MCF 10A (cell line): ENCODE measurements at regions of chr10 and their contacts with region 1.

Region 1: DNA sequence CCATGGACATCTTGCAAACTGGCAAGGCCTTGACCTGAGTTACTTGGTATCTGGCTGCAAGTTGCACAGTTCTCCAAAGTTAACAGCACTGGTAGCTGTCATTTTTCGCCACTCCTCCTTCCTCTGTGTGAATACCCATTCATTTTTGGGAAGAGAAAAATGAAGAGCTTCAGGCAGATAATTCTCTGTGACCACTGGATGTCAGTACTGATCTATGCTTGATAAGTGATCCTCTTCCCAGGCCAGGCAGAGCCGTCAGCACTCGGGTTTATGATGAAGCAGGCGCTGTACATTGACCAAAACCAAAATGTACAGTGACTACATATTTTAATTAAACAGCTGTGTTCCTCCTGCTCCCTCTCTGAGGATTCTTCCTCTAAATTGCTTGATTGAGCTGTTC is 55.9 kb upstream of the PDZD8 start:
- DNase-seq: peak; percentile 73
- H3K4me3 Mint-ChIP-seq: no peak overlapping the region
- H3K27ac Mint-ChIP-seq: no peak overlapping the region
- H3K4me1 Mint-ChIP-seq: no peaks in the 10 kb centered on the region
- H3K27me3 Mint-ChIP-seq: no peaks in the 10 kb centered on the region
- CTCF ChIP-seq: peak; percentile 36

Region 2: DNA sequence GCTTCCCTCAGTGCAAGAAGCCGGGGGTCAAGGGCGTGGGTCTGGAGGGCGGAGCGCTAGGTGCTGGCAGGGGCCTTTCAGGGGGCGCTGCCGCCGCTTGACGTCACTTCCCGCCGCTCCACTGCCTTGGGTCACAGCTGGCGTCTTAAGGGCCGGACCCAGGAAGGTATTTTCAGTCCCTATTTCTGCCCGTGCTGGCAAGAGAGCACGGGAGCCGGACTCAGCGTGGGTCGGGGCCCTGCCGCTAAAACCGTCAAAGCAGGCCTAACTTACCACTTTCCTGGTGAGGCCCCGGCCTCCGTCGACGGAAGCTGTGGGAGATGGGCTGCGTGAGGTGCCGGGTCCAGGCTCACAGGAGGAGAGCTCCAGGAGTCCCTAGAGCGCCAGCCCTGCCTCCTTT is 305.1 kb before region 1 on chr10:
- CTCF ChIA-PET with region 1: no interaction called
- POLR2A ChIA-PET with region 1: no interaction called
- intact Hi-C with region 1: no loop called
- DNase-seq: no peak
- H3K4me3 Mint-ChIP-seq: no peak overlapping the region
- H3K27ac Mint-ChIP-seq: no peak overlapping the region
- H3K4me1 Mint-ChIP-seq: no peaks in the 10 kb centered on the region
- H3K27me3 Mint-ChIP-seq: peaks cover 23% of the 10 kb centered on the region
- CTCF ChIP-seq: no peak

Region 3: DNA sequence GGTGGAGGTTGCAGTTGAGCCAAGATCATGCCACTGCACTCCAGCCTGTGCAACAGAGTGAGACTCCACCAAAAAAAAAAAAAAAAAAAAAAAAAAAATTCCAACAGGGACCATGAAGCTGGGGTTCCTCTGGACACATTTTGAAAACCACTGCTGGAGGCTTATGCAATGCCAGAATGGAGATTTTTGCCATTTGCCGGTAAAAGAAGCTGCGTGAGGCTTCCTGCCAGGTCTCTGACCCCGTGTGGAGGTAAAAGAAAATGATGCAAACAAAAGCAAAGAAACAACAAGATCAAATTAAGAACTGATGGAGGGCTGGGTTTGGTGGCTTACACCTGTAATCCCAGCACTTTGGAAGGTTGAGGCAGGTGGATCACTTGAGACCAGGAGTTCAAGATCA is 25.4 kb before region 1 on chr10:
- CTCF ChIA-PET with region 1: interaction called, 10 read pairs
- POLR2A ChIA-PET with region 1: no interaction called
- intact Hi-C with region 1: no loop called
- DNase-seq: no peak
- H3K4me3 Mint-ChIP-seq: no peak overlapping the region
- H3K27ac Mint-ChIP-seq: no peak overlapping the region
- H3K4me1 Mint-ChIP-seq: peaks cover 5% of the 10 kb centered on the region
- H3K27me3 Mint-ChIP-seq: no peaks in the 10 kb centered on the region
- CTCF ChIP-seq: no peak

Region 4: DNA sequence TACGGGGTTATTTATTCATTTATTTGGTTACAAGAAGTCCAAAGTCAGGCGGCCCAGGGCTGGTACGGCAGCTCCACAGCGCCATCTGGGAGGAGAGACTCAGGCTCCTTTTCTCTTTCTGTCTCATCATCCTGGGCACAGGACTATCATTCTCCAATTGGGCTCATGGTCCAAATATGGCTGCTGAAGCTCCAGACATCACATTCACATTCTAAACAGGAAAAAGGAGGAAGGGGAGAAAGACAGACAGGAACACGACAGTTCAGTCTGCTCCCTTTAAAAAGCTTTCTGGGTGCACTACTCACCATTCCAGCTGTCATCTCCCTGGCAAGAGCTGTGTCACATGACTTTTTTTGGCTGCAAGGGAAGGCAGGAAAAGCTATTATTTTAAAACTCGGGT is 18.5 kb after region 1 on chr10:
- CTCF ChIA-PET with region 1: interaction called, 48 read pairs
- POLR2A ChIA-PET with region 1: no interaction called
- intact Hi-C with region 1: no loop called
- DNase-seq: no peak
- H3K4me3 Mint-ChIP-seq: no peak overlapping the region
- H3K27ac Mint-ChIP-seq: no peak overlapping the region
- H3K4me1 Mint-ChIP-seq: peaks cover 6% of the 10 kb centered on the region
- H3K27me3 Mint-ChIP-seq: no peaks in the 10 kb centered on the region
- CTCF ChIP-seq: no peak

Region 5: DNA sequence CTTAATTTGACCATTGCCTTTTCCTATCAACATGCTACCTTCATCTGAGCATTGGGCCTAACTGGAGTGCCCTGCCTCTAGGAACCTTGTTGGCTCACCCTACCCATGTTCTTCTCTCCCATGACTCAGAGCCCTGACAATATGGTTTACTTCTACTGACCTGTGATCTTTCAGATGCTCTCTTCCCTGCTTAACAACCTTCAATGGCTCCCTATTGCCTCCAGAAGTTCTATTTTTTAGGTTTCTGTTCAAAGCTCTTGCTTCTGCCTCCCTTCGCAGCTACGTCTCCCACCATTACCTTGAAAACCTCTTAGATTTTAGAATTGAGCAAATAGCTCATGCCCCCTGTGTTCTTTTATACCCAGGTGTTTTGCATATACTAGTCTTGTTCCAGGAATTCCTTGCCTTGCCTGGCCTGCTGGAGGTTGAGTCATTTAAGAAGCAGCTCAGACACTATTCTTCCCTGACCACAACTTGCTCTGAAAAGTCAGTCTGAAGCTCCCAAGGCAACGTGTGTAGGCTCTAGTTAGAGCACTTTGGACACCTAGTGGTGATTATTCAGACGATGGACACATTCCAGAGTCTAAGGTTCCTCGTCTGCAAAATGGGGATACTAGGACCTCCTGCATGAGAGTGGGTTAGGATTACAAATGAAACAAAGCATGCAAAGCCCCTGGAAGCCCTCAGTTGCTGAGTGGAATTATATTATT is 47.0 kb after region 1 on chr10:
- CTCF ChIA-PET with region 1: interaction called, 25 read pairs
- POLR2A ChIA-PET with region 1: no interaction called
- intact Hi-C with region 1: loop called (anchors 1 kb)
- DNase-seq: peak; percentile 90
- H3K4me3 Mint-ChIP-seq: no peak overlapping the region
- H3K27ac Mint-ChIP-seq: peak overlapping the region; percentile 88
- H3K4me1 Mint-ChIP-seq: peaks cover 17% of the 10 kb centered on the region
- H3K27me3 Mint-ChIP-seq: no peaks in the 10 kb centered on the region
- CTCF ChIP-seq: peak; percentile 20

Region 6: DNA sequence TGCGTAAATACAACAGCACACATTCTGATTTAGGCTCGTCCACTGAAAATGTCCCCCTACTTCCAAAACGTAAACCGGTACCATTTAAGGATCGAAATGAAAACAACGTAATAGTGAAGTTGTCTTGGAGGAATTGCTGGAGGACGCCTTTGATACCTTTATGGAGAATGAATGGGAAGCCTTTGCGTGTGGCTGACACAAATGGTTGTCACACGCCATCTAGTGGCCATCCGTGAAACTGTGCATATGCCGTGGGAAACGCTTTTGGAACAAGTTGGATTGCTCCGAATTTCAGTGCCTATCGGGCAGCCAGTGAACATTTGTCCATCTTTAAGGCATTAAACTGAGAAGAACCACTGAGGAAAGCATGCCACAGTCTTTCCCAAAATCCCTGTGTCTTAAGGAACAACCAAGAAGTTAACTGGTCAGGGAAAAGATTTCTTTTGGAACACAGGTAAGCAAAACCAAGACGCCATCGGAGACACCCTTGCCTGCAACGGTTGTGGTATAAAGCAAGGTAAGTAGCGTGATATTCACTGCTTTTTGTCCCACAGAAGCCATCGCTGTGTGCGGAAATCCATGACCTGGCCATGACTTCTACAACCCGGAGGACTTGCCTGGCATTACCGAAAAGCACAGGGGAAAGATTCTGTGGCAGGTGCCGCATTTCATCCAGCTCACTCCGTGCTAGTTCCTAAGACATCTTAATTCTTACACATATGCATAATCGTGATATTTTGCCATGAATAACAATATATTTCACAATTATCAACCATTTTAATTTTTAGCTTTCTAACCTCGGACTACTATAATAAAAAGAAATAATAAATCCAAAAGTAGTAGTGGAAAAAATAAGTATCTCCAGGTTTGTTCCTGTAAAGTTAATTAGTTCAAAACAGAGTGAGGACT is 810.3 kb after region 1 on chr10:
- CTCF ChIA-PET with region 1: interaction called, 19 read pairs
- POLR2A ChIA-PET with region 1: no interaction called
- intact Hi-C with region 1: loop called (anchors 1 kb)
- DNase-seq: peak; percentile 86
- H3K4me3 Mint-ChIP-seq: peak overlapping the region; percentile 25
- H3K27ac Mint-ChIP-seq: no peak overlapping the region
- H3K4me1 Mint-ChIP-seq: no peaks in the 10 kb centered on the region
- H3K27me3 Mint-ChIP-seq: peaks cover 73% of the 10 kb centered on the region
- CTCF ChIP-seq: peak; percentile 96